Activated B cell treated with CpG ODN at 0.5 μM for 24 hours (primary cell): ENCODE measurements at regions of chr12 and their contacts with region 1.

Region 1: GRCh38 chr12:96219698-96220206 is 25.6 kb downstream of the ELK3 start:
- DNase-seq: no peak
- ATAC-seq: no peak
- H3K4me3 Mint-ChIP-seq: no peak overlapping the region
- H3K27ac Mint-ChIP-seq: no peak overlapping the region
- H3K4me1 Mint-ChIP-seq: peaks cover 30% of the 10 kb centered on the region
- H3K27me3 Mint-ChIP-seq: no peaks in the 10 kb centered on the region
- CTCF ChIP-seq: no peak

Region 2: GRCh38 chr12:95858479-95859343 is 361.0 kb before region 1 on chr12 and contains the start of gene SNRPF:
- CTCF ChIA-PET with region 1: no interaction called
- POLR2A ChIA-PET with region 1: no interaction called
- intact Hi-C with region 1: loop called (anchors 5 kb)
- DNase-seq: peak; percentile 85
- ATAC-seq: peak; percentile 97
- H3K4me3 Mint-ChIP-seq: no peak within 1 kb of the TSS
- H3K27ac Mint-ChIP-seq: peak within 1 kb of the TSS; percentile 4
- H3K4me1 Mint-ChIP-seq: peaks cover 12% of the 10 kb centered on the region
- H3K27me3 Mint-ChIP-seq: peaks cover 8% of the 10 kb centered on the region
- CTCF ChIP-seq: no peak
- total RNA-seq, gene SNRPF: 35.2 and 38.2 TPM in 2 replicates

Region 3: DNA sequence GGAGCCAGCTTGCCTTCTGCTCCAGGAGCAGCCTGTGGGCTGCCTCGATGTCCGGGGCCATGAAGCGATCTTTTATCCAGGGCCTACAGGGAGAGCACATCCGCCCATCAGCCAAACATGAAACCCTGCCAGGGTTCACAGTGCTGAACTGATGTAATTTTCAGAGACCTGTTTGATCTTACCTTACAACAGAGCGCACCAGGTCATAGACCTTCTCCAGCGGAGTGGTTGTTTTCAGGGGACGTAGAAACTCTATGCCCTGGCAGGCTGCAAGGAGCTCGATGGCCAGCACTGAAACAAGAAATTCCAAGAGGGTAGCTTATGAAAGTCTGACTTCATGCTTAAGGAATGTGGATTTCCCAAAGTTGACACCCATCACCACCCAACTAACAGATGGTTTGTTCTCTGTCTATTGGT is 243.3 kb before region 1 on chr12:
- CTCF ChIA-PET with region 1: no interaction called
- POLR2A ChIA-PET with region 1: interaction called, 13 read pairs
- intact Hi-C with region 1: no loop called
- DNase-seq: no peak
- ATAC-seq: no peak
- H3K4me3 Mint-ChIP-seq: no peak overlapping the region
- H3K27ac Mint-ChIP-seq: no peak overlapping the region
- H3K4me1 Mint-ChIP-seq: no peaks in the 10 kb centered on the region
- H3K27me3 Mint-ChIP-seq: no peaks in the 10 kb centered on the region
- CTCF ChIP-seq: no peak

Region 4: GRCh38 chr12:96020314-96021003 is 199.3 kb before region 1 on chr12:
- CTCF ChIA-PET with region 1: interaction called, 7 read pairs
- POLR2A ChIA-PET with region 1: no interaction called
- intact Hi-C with region 1: loop called (anchors 1 kb)
- DNase-seq: no peak
- ATAC-seq: peak; percentile 96
- H3K4me3 Mint-ChIP-seq: peak overlapping the region; percentile 63
- H3K27ac Mint-ChIP-seq: peak overlapping the region; percentile 90
- H3K4me1 Mint-ChIP-seq: peaks cover 33% of the 10 kb centered on the region
- H3K27me3 Mint-ChIP-seq: no peaks in the 10 kb centered on the region
- CTCF ChIP-seq: no peak

Region 5: GRCh38 chr12:96061864-96062453 is 157.8 kb before region 1 on chr12:
- CTCF ChIA-PET with region 1: interaction called, 90 read pairs
- POLR2A ChIA-PET with region 1: interaction called, 9 read pairs
- intact Hi-C with region 1: loop called (anchors 1 kb)
- DNase-seq: peak; percentile 37
- ATAC-seq: peak; percentile 92
- H3K4me3 Mint-ChIP-seq: no peak overlapping the region
- H3K27ac Mint-ChIP-seq: peak overlapping the region; percentile 71
- H3K4me1 Mint-ChIP-seq: peaks cover 31% of the 10 kb centered on the region
- H3K27me3 Mint-ChIP-seq: no peaks in the 10 kb centered on the region
- CTCF ChIP-seq: no peak

Region 6: DNA sequence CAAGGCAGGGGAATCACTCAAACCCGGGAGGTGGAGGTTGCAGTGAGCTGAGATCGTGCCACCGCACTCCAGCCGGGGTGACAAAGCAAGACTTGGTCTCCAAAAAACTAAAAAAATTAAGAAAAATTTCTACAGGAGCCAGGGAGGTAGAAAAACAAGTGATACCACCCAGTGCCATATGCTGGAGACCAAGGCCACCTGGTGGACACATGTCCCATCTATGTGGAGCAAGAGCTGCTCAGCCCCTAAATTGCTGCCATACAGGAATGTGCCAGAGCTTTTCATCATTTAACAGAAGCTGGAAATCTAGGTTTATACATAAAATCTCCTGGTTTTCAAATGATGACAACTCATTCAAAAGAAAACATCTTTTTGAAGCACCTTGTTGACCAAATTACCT is 86.9 kb before region 1 on chr12:
- CTCF ChIA-PET with region 1: interaction called, 13 read pairs
- POLR2A ChIA-PET with region 1: no interaction called
- intact Hi-C with region 1: no loop called
- DNase-seq: no peak
- ATAC-seq: no peak
- H3K4me3 Mint-ChIP-seq: no peak overlapping the region
- H3K27ac Mint-ChIP-seq: no peak overlapping the region
- H3K4me1 Mint-ChIP-seq: peaks cover 18% of the 10 kb centered on the region
- H3K27me3 Mint-ChIP-seq: no peaks in the 10 kb centered on the region
- CTCF ChIP-seq: no peak

Region 7: GRCh38 chr12:96194971-96195844 is 24.5 kb before region 1 on chr12:
- CTCF ChIA-PET with region 1: interaction called, 13 read pairs
- POLR2A ChIA-PET with region 1: interaction called, 31 read pairs
- intact Hi-C with region 1: loop called (anchors 1 kb)
- DNase-seq: peak; percentile 45
- ATAC-seq: peak; percentile 57
- H3K4me3 Mint-ChIP-seq: peak overlapping the region; percentile 99
- H3K27ac Mint-ChIP-seq: peak overlapping the region; percentile 99
- H3K4me1 Mint-ChIP-seq: peaks cover 72% of the 10 kb centered on the region
- H3K27me3 Mint-ChIP-seq: no peaks in the 10 kb centered on the region
- CTCF ChIP-seq: no peak

Region 8: DNA sequence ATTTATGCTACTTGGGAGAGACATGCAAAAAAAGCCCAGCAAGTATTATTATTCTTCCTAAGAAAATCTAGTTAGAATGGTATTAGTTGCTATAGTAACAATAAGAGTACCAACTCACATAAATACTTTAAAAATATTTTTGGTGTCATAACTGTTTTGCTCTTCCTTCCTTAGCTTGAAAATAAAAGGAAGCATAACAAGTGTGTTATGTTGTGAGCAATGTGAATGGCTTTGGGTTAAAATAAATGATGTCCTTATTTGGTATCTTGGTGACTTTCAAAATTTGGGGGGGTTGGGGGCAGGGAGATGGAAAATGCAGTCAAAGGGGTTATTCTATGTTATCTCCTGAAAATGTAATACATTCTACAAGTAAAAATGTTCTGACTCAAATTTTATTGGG is 65.4 kb after region 1 on chr12:
- CTCF ChIA-PET with region 1: no interaction called
- POLR2A ChIA-PET with region 1: no interaction called
- intact Hi-C with region 1: no loop called
- DNase-seq: no peak
- ATAC-seq: no peak
- H3K4me3 Mint-ChIP-seq: no peak overlapping the region
- H3K27ac Mint-ChIP-seq: no peak overlapping the region
- H3K4me1 Mint-ChIP-seq: no peaks in the 10 kb centered on the region
- H3K27me3 Mint-ChIP-seq: no peaks in the 10 kb centered on the region
- CTCF ChIP-seq: no peak